PC-9 (cell line): ENCODE measurements at regions of chr10 and their contacts with region 1.

Region 1: GRCh38 chr10:21495752-21496342 is 29.6 kb downstream of the SKIDA1 start:
- DNase-seq: peak; percentile 56 to 94
- H3K4me3 ChIP-seq: peak overlapping the region; percentile 81
- H3K27ac ChIP-seq: peak overlapping the region; percentile 48
- H3K4me1 ChIP-seq: peaks cover 6% of the 10 kb centered on the region
- H3K27me3 ChIP-seq: no peaks in the 10 kb centered on the region
- CTCF ChIP-seq: peak; percentile 78

Region 2: GRCh38 chr10:21278491-21279239 is 217.2 kb before region 1 on chr10:
- CTCF ChIA-PET with region 1: interaction called, 11 read pairs
- POLR2A ChIA-PET with region 1: no interaction called
- intact Hi-C with region 1: loop called (anchors 1 kb)
- DNase-seq: peak; percentile 71 to 90
- H3K4me3 ChIP-seq: no peak overlapping the region
- H3K27ac ChIP-seq: 0 out of 2 replicates have a peak overlapping the region, but pooled peaks have one; percentile 25
- H3K4me1 ChIP-seq: peaks cover 19% of the 10 kb centered on the region
- H3K27me3 ChIP-seq: no peaks in the 10 kb centered on the region
- CTCF ChIP-seq: peak; percentile 89

Region 3: GRCh38 chr10:21364196-21365114 is 131.4 kb before region 1 on chr10:
- CTCF ChIA-PET with region 1: no interaction called
- POLR2A ChIA-PET with region 1: interaction called, 29 read pairs
- intact Hi-C with region 1: loop called (anchors 1 kb)
- DNase-seq: peak; percentile 88 to 97
- H3K4me3 ChIP-seq: peak overlapping the region; percentile 48; the same call in 1 of the 2 replicates
- H3K27ac ChIP-seq: peak overlapping the region; percentile 100
- H3K4me1 ChIP-seq: peaks cover 75% of the 10 kb centered on the region
- H3K27me3 ChIP-seq: no peaks in the 10 kb centered on the region
- CTCF ChIP-seq: no peak

Region 4: DNA sequence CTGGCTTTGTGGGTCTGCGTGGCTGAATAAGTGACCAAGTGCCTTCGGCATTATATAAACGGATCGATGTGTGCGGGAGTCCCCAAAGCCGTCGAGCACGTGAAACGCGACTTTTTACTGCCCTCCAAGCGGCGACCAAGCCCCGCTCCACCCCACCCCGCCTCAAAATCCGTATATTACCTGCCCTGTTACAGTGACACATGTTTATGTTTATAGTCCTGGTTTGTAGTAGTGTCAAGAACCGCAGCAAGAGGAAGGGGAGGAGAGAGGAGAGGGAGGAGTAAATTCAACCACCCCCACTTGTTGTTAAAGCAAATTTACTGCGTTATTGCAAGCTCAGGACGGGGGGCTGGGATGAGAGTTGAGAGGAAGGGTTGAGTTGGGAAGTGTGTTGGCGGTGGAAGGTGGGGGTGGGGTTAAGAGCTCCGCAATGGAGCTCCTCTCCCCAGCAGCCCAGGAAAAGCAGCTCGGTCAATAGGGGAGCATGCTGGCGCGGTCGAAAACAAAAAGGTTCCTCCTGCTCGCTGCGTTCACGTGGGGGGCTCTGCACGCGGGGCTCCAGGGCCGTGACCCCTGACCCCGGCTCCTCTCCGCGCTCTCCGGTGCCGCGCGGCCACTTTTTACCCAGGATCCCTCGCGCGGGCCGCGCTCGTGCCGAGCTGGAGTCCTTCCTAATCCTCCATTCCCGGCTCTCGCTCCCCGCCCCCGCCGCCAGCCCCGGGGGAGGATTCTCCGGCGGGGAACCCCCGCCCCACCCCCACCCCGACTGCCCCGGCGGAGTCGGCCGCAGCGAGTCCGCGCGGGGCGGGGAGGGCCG is 29.7 kb after region 1 on chr10 and contains the start of gene SKIDA1:
- CTCF ChIA-PET with region 1: interaction called, 17 read pairs
- POLR2A ChIA-PET with region 1: interaction called, 4 read pairs
- intact Hi-C with region 1: no loop called
- DNase-seq: peak; percentile 85
- H3K4me3 ChIP-seq: peak within 1 kb of the TSS; percentile 71
- H3K27ac ChIP-seq: peak within 1 kb of the TSS; percentile 79
- H3K4me1 ChIP-seq: peaks cover 32% of the 10 kb centered on the region
- H3K27me3 ChIP-seq: no peaks in the 10 kb centered on the region
- CTCF ChIP-seq: no peak
- total RNA-seq, gene SKIDA1: 0.65 and 1.1 TPM in 2 replicates

Region 5: DNA sequence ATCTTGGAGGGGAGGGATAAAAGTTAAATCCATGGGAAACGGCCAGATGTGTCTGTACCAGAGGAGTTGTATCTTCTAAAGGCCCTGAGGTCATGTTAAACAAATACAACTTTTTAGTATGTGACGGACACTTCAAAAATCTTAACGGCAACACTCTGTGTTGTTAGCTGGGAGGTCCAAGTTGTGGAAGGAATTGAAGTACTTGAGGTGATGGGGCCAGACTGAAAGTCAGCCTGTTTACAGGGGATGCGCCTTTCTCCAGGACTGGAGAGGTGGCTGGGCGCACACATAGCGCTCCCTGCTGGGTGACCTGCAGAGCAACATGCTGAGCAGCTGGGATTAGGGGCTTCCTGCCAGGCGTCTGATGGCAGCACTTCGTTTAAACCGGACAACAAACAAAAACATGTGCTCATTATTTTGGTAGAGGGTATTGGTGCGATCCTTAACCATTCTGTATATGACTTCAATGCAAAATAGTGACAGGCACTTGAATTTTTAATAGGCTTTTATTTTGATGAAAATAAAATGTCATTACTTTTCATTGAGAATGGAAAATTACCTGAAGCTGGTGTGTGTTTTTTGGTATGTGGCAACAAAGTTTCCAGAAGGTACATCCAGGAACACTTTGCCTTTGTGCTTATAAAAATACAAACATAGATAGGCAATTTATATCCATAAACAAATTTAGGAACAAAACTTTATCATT is 236.4 kb after region 1 on chr10:
- CTCF ChIA-PET with region 1: no interaction called
- POLR2A ChIA-PET with region 1: no interaction called
- intact Hi-C with region 1: loop called (anchors 1 kb)
- DNase-seq: no peak
- H3K4me3 ChIP-seq: no peak overlapping the region
- H3K27ac ChIP-seq: no peak overlapping the region
- H3K4me1 ChIP-seq: no peaks in the 10 kb centered on the region
- H3K27me3 ChIP-seq: no peaks in the 10 kb centered on the region
- CTCF ChIP-seq: peak; percentile 48

Region 6: GRCh38 chr10:22386503-22386902 is 890.7 kb after region 1 on chr10:
- CTCF ChIA-PET with region 1: no interaction called
- POLR2A ChIA-PET with region 1: no interaction called
- intact Hi-C with region 1: no loop called
- DNase-seq: no peak
- H3K4me3 ChIP-seq: no peak overlapping the region
- H3K27ac ChIP-seq: no peak overlapping the region
- H3K4me1 ChIP-seq: no peaks in the 10 kb centered on the region
- H3K27me3 ChIP-seq: no peaks in the 10 kb centered on the region
- CTCF ChIP-seq: no peak